Naive thymus-derived CD4-positive, alpha-beta T cell (primary cell): ENCODE measurements at regions of chr7 and their contacts with region 1.

Region 1: GRCh38 chr7:112080441-112080840 is 125.8 kb downstream of the DOCK4 start:
- DNase-seq: no peak
- ATAC-seq: peak; percentile 80
- H3K4me3 ChIP-seq: no peak overlapping the region
- H3K4me3 Mint-ChIP-seq: no peak overlapping the region
- H3K27ac ChIP-seq: no peak overlapping the region
- H3K27ac Mint-ChIP-seq: no peak overlapping the region
- H3K4me1 ChIP-seq: no peaks in the 10 kb centered on the region
- H3K4me1 Mint-ChIP-seq: peaks cover 0 to 10% (median 7%) of the 10 kb centered on the region in 7 donors
- H3K27me3 ChIP-seq: no peaks in the 10 kb centered on the region
- H3K27me3 Mint-ChIP-seq: peaks cover 12 to 34% (median 20%) of the 10 kb centered on the region in 5 donors

Region 2: GRCh38 chr7:112021379-112022044 is 58.9 kb before region 1 on chr7:
- CTCF ChIA-PET with region 1: no interaction called
- POLR2A ChIA-PET with region 1: no interaction called
- intact Hi-C with region 1: no loop called
- DNase-seq: no peak
- ATAC-seq: no peak
- H3K4me3 ChIP-seq: no peak overlapping the region
- H3K4me3 Mint-ChIP-seq: no peak overlapping the region
- H3K27ac ChIP-seq: no peak overlapping the region
- H3K27ac Mint-ChIP-seq: no peak overlapping the region
- H3K4me1 ChIP-seq: no peaks in the 10 kb centered on the region
- H3K4me1 Mint-ChIP-seq: no peaks in the 10 kb centered on the region
- H3K27me3 ChIP-seq: no peaks in the 10 kb centered on the region
- H3K27me3 Mint-ChIP-seq: peaks cover 0 to 20% (median 9%) of the 10 kb centered on the region in 5 donors

Region 3: GRCh38 chr7:112414855-112415490 is 334.5 kb after region 1 on chr7:
- CTCF ChIA-PET with region 1: no interaction called
- POLR2A ChIA-PET with region 1: no interaction called
- intact Hi-C with region 1: loop called in 1 of 2 experiments (anchors 10 kb)
- DNase-seq: peak in 2 of 9 donors; percentile 15 to 17
- ATAC-seq: no peak
- H3K4me3 ChIP-seq: no peak overlapping the region
- H3K4me3 Mint-ChIP-seq: no peak overlapping the region
- H3K27ac ChIP-seq: no peak overlapping the region
- H3K27ac Mint-ChIP-seq: no peak overlapping the region
- H3K4me1 ChIP-seq: no peaks in the 10 kb centered on the region
- H3K4me1 Mint-ChIP-seq: peaks cover 0 to 5% (median 4%) of the 10 kb centered on the region in 7 donors
- H3K27me3 ChIP-seq: no peaks in the 10 kb centered on the region
- H3K27me3 Mint-ChIP-seq: peaks cover 4 to 29% (median 8%) of the 10 kb centered on the region in 5 donors